ENCODE measurements at regions of chr13 and their contacts with region 1.

Region 1: GRCh38 chr13:79349011-79349410 is 57.0 kb downstream of the RBM26 start:
- DNase-seq: no peak
- ATAC-seq: no peak
- H3K4me3 ChIP-seq: no peak overlapping the region
- H3K4me3 Mint-ChIP-seq: no peak overlapping the region
- H3K27ac ChIP-seq: no peak overlapping the region
- H3K27ac Mint-ChIP-seq: no peak overlapping the region
- H3K4me1 ChIP-seq: no peaks in the 10 kb centered on the region
- H3K4me1 Mint-ChIP-seq: peaks cover 23% of the 10 kb centered on the region
- H3K27me3 ChIP-seq: no peaks in the 10 kb centered on the region
- H3K27me3 Mint-ChIP-seq: no peaks in the 10 kb centered on the region
- CTCF ChIP-seq: no peak

Region 2: DNA sequence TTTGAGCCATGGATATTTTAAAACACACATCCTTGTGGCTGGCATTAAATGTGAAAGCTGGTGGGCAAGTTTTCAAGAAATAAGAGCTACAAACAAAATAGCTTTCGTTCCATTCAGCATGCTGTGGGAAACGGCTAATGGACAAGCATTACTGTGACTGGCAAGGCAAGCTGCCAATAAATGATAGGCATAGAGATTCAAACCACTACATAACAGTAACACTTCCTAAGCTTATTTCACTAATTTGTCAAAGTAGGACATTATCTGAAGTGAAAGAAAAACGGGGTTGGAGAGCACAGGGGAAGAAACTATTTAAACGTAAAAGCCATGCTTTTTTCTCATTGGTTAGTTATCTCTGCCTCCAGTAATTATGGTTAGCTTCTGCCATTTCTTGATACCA is 716.0 kb before region 1 on chr13:
- CTCF ChIA-PET with region 1: no interaction called
- POLR2A ChIA-PET with region 1: no interaction called
- intact Hi-C with region 1: no loop called
- DNase-seq: no peak
- ATAC-seq: no peak
- H3K4me3 ChIP-seq: no peak overlapping the region
- H3K4me3 Mint-ChIP-seq: no peak overlapping the region
- H3K27ac ChIP-seq: no peak overlapping the region
- H3K27ac Mint-ChIP-seq: no peak overlapping the region
- H3K4me1 ChIP-seq: no peaks in the 10 kb centered on the region
- H3K4me1 Mint-ChIP-seq: peaks cover 7% of the 10 kb centered on the region
- H3K27me3 ChIP-seq: no peaks in the 10 kb centered on the region
- H3K27me3 Mint-ChIP-seq: no peaks in the 10 kb centered on the region
- CTCF ChIP-seq: no peak

Region 3: DNA sequence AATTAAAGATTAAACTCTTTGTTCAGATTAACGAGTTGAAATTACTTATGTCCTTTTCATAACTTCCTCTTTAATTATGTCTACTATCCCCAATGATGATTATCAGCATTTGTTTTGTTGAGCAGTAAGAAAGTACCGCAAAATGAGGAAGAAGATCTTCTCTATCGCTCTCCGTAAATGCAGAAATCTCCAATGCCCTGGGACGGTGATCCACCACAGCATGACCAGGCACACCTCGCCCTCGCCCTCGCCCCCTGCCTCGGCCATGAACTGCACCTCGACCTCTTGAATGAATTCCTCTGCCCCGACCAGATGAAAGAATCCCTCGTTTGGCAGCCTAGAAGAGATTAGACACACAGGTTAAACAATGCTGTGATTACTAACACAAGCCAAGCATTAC is 12.0 kb before region 1 on chr13:
- CTCF ChIA-PET with region 1: no interaction called
- POLR2A ChIA-PET with region 1: no interaction called
- intact Hi-C with region 1: loop called in 1 of 2 experiments (anchors 2 kb)
- DNase-seq: no peak
- ATAC-seq: no peak
- H3K4me3 ChIP-seq: no peak overlapping the region
- H3K4me3 Mint-ChIP-seq: no peak overlapping the region
- H3K27ac ChIP-seq: no peak overlapping the region
- H3K27ac Mint-ChIP-seq: peak overlapping the region; percentile 69
- H3K4me1 ChIP-seq: no peaks in the 10 kb centered on the region
- H3K4me1 Mint-ChIP-seq: peaks cover 2% of the 10 kb centered on the region
- H3K27me3 ChIP-seq: no peaks in the 10 kb centered on the region
- H3K27me3 Mint-ChIP-seq: no peaks in the 10 kb centered on the region
- CTCF ChIP-seq: no peak

Region 4: GRCh38 chr13:79360095-79360494 is 11.1 kb after region 1 on chr13:
- CTCF ChIA-PET with region 1: no interaction called
- POLR2A ChIA-PET with region 1: no interaction called
- intact Hi-C with region 1: loop called in 1 of 2 experiments (anchors 1 kb)
- DNase-seq: no peak
- ATAC-seq: no peak
- H3K4me3 ChIP-seq: no peak overlapping the region
- H3K4me3 Mint-ChIP-seq: no peak overlapping the region
- H3K27ac ChIP-seq: no peak overlapping the region
- H3K27ac Mint-ChIP-seq: no peak overlapping the region
- H3K4me1 ChIP-seq: no peaks in the 10 kb centered on the region
- H3K4me1 Mint-ChIP-seq: peaks cover 12% of the 10 kb centered on the region
- H3K27me3 ChIP-seq: no peaks in the 10 kb centered on the region
- H3K27me3 Mint-ChIP-seq: no peaks in the 10 kb centered on the region
- CTCF ChIP-seq: no peak

Region 5: GRCh38 chr13:79405829-79406596 is 57.0 kb after region 1 on chr13 and contains the start of gene RBM26:
- CTCF ChIA-PET with region 1: no interaction called
- POLR2A ChIA-PET with region 1: no interaction called
- intact Hi-C with region 1: no loop called
- DNase-seq: peak; percentile 86 to 98 (median 93)
- ATAC-seq: peak; percentile 89
- H3K4me3 ChIP-seq: peak within 1 kb of the TSS; percentile 84 to 89
- H3K4me3 Mint-ChIP-seq: peak within 1 kb of the TSS; percentile 96
- H3K27ac ChIP-seq: peak within 1 kb of the TSS; percentile 89 to 92
- H3K27ac Mint-ChIP-seq: peak within 1 kb of the TSS; percentile 99
- H3K4me1 ChIP-seq: peaks cover 56% of the 10 kb centered on the region
- H3K4me1 Mint-ChIP-seq: peaks cover 30% of the 10 kb centered on the region
- H3K27me3 ChIP-seq: no peaks in the 10 kb centered on the region
- H3K27me3 Mint-ChIP-seq: no peaks in the 10 kb centered on the region
- CTCF ChIP-seq: peak; percentile 24
- total RNA-seq, gene RBM26: 55.7 to 61.1 TPM

Measured in CD8-positive, alpha-beta T cell (primary cell).